ENCODE measurements at regions of chr11 and their contacts with region 1.

Region 1: DNA sequence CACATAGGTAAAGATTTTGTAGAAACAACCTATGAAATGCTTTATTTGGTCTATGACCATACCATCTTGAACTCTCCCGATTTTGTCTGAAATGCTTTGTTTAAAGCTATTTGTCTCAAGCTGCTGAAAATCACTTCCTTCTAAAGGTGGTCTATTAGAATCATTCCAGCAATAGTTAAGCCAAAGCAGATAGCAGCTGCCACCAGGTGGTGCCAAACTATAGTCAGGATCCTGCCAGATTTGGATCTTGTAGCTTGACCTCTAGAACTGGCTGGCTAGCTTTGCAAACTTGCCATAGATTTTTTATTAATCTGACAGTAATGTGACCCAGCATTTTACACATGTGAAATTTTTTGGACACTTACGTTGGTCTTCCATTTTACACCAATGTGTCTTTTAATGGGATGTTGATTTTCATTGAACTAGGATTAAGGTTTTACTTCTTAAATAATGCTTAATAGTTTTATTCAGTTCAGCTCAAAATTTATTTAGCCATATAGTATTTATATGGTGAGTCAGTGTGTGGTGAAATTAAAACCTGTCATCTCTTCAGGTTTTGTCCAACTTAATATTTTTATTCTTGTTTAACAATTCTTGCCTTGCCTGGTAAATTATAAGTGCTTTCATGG is 19.7 kb downstream of the CTR9 start:
- DNase-seq: peak; percentile 50
- ATAC-seq: no peak
- H3K4me3 Mint-ChIP-seq: no peak overlapping the region
- H3K27ac Mint-ChIP-seq: no peak overlapping the region
- H3K4me1 Mint-ChIP-seq: peaks cover 2% of the 10 kb centered on the region
- H3K27me3 Mint-ChIP-seq: no peaks in the 10 kb centered on the region

Region 2: GRCh38 chr11:10750838-10751580 is 19.7 kb before region 1 on chr11 and contains the start of gene CTR9:
- CTCF ChIA-PET with region 1: interaction called, 10 read pairs
- DNase-seq: peak; percentile 96
- ATAC-seq: peak; percentile 92
- H3K4me3 Mint-ChIP-seq: peak within 1 kb of the TSS; percentile 91
- H3K27ac Mint-ChIP-seq: peak within 1 kb of the TSS; percentile 92
- H3K4me1 Mint-ChIP-seq: peaks cover 29% of the 10 kb centered on the region
- H3K27me3 Mint-ChIP-seq: no peaks in the 10 kb centered on the region
- total RNA-seq, gene CTR9: 33.9 to 44.6 TPM

Region 3: GRCh38 chr11:10784232-10785145 is 13.7 kb after region 1 on chr11:
- CTCF ChIA-PET with region 1: interaction called, 50 read pairs
- DNase-seq: no peak
- ATAC-seq: no peak
- H3K4me3 Mint-ChIP-seq: no peak overlapping the region
- H3K27ac Mint-ChIP-seq: no peak overlapping the region
- H3K4me1 Mint-ChIP-seq: peaks cover under 1% of the 10 kb centered on the region
- H3K27me3 Mint-ChIP-seq: no peaks in the 10 kb centered on the region